Activated CD8-positive, alpha-beta T cell treated with anti-CD3 and anti-CD28 coated beads for 36 hours (primary cell): ENCODE measurements at regions of chr9 and their contacts with region 1.

Region 1: DNA sequence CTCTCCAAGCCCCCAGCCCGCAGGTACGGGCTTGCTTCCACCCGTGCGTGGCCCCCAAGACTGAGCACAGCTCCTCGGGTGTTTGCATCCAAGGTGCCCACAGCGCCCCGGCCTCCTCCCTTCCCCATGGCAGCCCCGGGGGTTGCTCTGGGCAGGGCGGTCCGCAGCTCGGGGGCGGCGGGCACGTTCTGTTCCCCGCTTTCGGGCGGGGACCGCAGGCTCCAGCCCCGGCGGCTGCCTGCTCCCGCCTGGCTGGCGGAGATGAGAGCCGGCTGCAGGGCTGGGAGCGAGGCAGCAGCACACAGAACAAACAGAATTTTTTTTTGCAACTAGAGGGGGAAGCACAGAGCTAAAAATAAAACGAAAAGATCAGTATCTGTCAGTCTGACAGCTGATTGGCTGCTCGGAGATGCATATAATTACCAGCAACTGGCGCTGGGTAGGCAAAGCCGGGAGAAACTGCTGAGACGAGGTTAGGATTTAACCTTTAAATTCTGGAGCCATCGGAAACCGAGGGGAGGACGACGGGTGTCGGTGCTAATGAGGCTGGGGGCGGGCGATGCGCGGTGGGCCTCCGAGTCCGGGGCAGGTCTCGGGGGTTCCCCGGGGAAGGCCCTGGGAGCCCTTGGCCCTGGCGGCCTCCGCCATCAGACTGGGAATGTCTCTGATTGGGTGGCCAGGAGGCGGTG is 142.7 kb upstream of the IER5L start:
- DNase-seq: peak; percentile 75
- ATAC-seq: peak; percentile 89
- H3K4me3 Mint-ChIP-seq: peak overlapping the region; percentile 72
- H3K27ac Mint-ChIP-seq: peak overlapping the region; percentile 85
- H3K4me1 Mint-ChIP-seq: peaks cover 26% of the 10 kb centered on the region
- H3K27me3 Mint-ChIP-seq: no peaks in the 10 kb centered on the region
- CTCF ChIP-seq: no peak

Region 2: DNA sequence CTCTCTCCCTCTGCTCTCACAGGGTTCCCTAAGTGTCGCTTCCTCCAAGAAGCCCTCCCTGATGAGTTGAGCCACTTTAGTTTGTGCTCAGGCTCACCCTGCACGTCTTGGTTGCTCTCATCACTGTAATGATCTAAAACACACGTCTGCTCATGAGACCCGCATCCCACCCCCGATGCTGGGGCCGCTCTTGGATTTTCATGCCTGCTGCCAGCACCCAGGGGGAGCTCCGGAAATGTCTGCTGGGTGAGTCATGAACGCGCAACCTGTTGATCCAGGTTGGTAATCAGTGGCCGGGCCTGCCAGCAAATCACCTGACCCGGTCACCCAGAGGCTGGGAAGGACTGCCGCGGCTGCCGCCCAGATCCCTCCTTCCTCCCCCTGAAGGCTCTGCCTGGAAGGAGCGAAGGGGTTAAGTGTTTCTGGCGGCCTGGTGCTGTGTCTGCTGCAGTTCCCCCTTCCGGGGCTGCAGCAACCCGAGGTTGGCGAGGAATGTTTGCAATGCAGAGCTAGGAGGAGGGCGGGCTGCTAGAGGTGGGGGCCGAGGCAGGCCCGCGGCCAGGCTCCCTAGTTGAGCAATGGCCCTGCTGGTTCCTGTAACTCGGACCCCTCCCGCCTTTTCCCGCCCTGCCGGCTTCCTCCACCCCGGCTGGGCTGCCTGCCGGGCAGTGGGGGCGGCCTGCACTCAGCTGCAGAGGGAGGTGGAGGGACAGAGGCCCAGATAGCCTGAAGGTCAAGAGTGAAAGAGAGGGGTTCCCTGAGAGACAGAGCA is 13.4 kb after region 1 on chr9:
- CTCF ChIA-PET with region 1: interaction called, 7 read pairs
- POLR2A ChIA-PET with region 1: interaction called, 14 read pairs
- intact Hi-C with region 1: no loop called
- DNase-seq: peak; percentile 67
- ATAC-seq: peak; percentile 60
- H3K4me3 Mint-ChIP-seq: peak overlapping the region; percentile 44
- H3K27ac Mint-ChIP-seq: peak overlapping the region; percentile 59
- H3K4me1 Mint-ChIP-seq: peaks cover 28% of the 10 kb centered on the region
- H3K27me3 Mint-ChIP-seq: peaks cover 3% of the 10 kb centered on the region
- CTCF ChIP-seq: no peak